ENCODE measurements at regions of chr9 and their contacts with region 1.

Region 1: DNA sequence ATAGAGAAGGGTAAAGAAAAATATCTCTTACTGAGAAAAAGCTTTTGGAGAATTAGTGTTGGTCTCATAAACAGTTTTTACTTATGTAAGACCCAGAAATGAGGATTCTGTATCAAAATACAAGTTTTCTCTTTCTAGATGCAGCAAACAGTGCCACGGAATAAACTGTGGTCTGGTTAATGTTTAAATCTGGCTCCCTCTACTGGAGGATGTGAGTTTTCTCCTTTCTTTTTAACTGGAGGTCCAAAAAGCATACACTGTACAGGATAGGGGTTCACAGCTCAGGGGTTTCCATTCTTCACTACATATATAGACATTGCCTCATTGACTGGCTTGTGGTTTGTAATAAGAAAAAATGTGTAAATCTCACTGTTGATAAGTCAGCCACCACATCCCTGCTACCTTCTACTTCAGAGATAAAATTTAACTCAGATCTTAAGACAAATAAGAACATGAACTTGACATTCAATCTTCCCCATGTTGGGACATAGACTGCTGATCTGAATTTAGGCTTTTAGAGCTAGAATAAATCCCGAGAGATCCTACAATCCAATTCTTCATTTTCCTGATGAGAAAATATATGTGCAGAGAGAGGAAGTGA is 98.9 kb downstream of the CFAP95 start:
- H3K4me3 ChIP-seq: no peak overlapping the region
- H3K27ac ChIP-seq: no peak overlapping the region
- H3K4me1 ChIP-seq: no peaks in the 10 kb centered on the region
- CTCF ChIP-seq: no peak

Region 2: DNA sequence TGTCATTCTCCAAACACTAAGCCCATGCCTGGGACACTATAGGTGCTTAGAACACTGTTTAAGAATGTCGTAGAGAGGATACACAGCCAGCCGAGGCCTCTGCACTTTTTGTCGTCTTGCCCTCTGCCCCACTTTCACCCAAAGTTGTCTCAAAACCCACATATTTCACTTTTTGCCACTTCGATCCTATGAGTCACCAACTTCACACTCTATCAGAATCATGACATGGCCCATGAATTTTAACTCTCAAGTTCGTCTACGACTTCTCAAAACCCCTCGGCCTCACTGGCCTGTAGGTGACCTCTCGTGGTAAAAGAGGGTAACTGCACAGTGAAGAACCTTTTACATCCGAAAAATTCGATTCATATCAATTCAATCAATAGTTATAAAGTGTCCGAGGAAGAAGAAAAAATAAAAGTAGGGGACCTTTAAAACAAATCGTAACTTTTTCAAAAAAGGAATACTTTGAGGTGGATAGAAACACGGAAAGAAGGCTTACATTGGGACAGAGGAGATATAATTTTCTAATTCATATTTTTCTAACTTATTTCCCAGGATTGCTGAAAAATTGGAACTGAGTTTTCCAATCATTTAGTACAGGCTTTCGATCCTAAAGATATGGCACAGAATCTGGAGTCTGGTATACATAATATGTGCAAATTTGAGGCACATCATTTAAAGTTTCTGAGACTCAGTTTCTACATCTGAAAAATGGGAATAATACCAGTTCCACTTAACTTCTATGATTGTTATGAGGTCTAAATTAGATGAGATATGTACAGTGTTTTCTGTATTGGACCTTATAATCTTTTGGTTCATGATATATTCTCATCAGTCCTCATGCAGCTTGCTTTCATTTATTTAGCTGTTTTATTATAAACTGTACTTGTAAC is 370.0 kb before region 1 on chr9:
- CTCF ChIA-PET with region 1: interaction called, 10 read pairs
- POLR2A ChIA-PET with region 1: no interaction called
- H3K4me3 ChIP-seq: no peak overlapping the region
- H3K27ac ChIP-seq: no peak overlapping the region
- H3K4me1 ChIP-seq: no peaks in the 10 kb centered on the region
- CTCF ChIP-seq: 0 out of 2 replicates have a peak, but pooled peaks have one; percentile 36

Region 3: GRCh38 chr9:69809304-69809863 is 110.2 kb before region 1 on chr9:
- CTCF ChIA-PET with region 1: interaction called, 12 read pairs
- POLR2A ChIA-PET with region 1: no interaction called
- H3K4me3 ChIP-seq: no peak overlapping the region
- H3K27ac ChIP-seq: no peak overlapping the region
- H3K4me1 ChIP-seq: no peaks in the 10 kb centered on the region
- CTCF ChIP-seq: no peak

Region 4: GRCh38 chr9:69894720-69895119 is 24.8 kb before region 1 on chr9:
- CTCF ChIA-PET with region 1: interaction called, 11 read pairs
- POLR2A ChIA-PET with region 1: no interaction called
- H3K4me3 ChIP-seq: no peak overlapping the region
- H3K27ac ChIP-seq: no peak overlapping the region
- H3K4me1 ChIP-seq: no peaks in the 10 kb centered on the region
- CTCF ChIP-seq: no peak

Region 5: DNA sequence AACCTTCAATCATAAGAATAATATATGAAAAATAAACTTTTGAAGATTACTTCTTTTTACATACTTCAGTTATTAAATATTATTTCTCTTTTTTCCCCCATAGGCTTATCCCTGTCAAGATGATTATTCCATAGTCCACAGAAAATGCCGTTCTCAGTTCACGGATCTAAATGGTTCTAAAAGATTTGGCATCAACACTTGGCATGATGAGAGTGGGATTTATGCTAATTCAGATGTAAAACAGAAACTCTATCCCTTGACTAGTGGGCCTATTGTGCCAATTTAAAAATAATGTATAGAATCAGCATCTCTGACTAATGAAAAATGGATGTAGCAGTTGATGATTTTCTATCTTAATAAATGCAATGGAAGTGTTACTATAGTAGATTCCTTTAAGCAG is 13.7 kb before region 1 on chr9:
- CTCF ChIA-PET with region 1: interaction called, 32 read pairs
- POLR2A ChIA-PET with region 1: no interaction called
- H3K4me3 ChIP-seq: no peak overlapping the region
- H3K27ac ChIP-seq: no peak overlapping the region
- H3K4me1 ChIP-seq: no peaks in the 10 kb centered on the region
- CTCF ChIP-seq: no peak

Region 6: DNA sequence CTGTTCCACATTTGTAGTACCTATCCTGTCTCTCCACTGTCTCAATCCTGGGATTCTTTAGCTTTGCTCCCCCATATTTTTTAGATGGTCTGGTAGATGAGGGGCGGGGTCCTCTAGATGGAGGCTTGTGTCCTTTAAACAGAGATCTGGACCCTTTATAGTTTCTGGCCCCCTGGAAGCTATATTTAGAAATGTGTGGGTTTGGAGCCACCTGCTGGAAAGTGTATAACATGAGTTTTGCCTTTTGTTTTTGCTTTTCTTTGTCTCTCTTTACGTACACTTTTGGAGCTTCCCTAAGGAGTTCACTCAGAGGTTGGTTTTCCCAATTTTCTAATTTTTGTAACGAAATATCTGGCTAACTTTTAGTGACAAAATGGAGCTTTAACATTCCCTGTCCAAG is 11.8 kb after region 1 on chr9:
- CTCF ChIA-PET with region 1: interaction called, 25 read pairs
- POLR2A ChIA-PET with region 1: no interaction called
- H3K4me3 ChIP-seq: no peak overlapping the region
- H3K27ac ChIP-seq: no peak overlapping the region
- H3K4me1 ChIP-seq: no peaks in the 10 kb centered on the region
- CTCF ChIP-seq: no peak

Measured in HEK293 (cell line).